ENCODE measurements at regions of chr2 and their contacts with region 1.

Region 1: DNA sequence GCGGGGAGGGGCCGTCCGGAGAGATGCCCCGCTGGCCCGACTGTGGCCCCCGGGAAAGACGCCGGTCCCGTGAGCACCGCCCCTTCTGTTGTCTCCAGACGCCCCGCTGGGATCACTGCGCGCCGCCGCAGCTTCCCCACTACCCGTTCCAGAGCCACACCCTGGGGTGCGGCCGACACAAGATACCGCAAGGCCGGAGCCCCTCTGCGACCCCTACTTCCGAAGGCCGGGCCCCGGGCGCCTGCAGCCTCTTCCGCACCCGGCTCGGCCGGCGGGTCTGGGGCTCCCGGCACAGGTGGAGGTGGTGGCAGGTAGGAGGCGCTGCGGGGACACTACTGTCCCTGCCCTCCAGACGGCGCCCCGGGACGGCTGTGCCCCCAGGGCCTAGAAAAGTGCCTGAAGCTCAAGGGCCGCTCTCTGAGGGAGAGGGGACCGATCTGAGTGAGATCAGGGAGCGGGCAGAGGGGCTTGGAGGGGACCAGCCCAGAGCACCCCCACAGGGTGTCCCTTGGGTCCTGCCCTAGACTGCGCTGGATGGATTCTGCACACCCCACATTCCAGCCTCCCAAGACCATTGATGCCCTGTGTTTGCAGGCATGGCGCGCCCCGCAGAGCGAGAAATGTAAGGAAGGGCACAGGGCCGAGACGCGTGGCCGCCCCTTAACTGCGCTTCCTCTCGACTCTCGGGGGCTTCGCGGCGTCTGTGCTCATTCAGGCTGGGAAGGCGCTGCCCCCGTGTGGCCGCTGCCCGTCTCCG is 80.0 kb downstream of the GFPT1 start:
- DNase-seq: peak; percentile 77
- ATAC-seq: peak; percentile 90
- H3K4me3 ChIP-seq: peak overlapping the region; percentile 35; the same call in 1 of the 2 replicates
- H3K27ac ChIP-seq: peak overlapping the region; percentile 71
- H3K4me1 ChIP-seq: peaks cover 31% of the 10 kb centered on the region
- H3K27me3 ChIP-seq: no peaks in the 10 kb centered on the region
- CTCF ChIP-seq: peak; percentile 93
- POLR2A ChIP-seq: peak; percentile 57
- RAD21 ChIP-seq: peak; percentile 98

Region 2: GRCh38 chr2:68943581-68944568 is 363.1 kb before region 1 on chr2:
- CTCF ChIA-PET with region 1: interaction called, 3 read pairs
- POLR2A ChIA-PET with region 1: no interaction called
- dilution Hi-C with region 1: no loop called
- in situ Hi-C with region 1: loop called (anchors 5 kb)
- intact Hi-C with region 1: loop called (anchors 1 kb)
- DNase-seq: peak; percentile 64
- ATAC-seq: peak; percentile 98
- H3K4me3 ChIP-seq: no peak overlapping the region
- H3K27ac ChIP-seq: peak overlapping the region; percentile 61
- H3K4me1 ChIP-seq: peaks cover 5% of the 10 kb centered on the region
- H3K27me3 ChIP-seq: no peaks in the 10 kb centered on the region
- CTCF ChIP-seq: peak; percentile 76
- POLR2A ChIP-seq: 0 out of 2 replicates have a peak, but pooled peaks have one; percentile 28
- RAD21 ChIP-seq: peak; percentile 82

Region 3: GRCh38 chr2:69026026-69026425 is 281.0 kb before region 1 on chr2:
- CTCF ChIA-PET with region 1: interaction called, 3 read pairs
- POLR2A ChIA-PET with region 1: no interaction called
- dilution Hi-C with region 1: loop called (anchors 25 kb)
- in situ Hi-C with region 1: no loop called
- intact Hi-C with region 1: loop called (anchors 2 kb)
- DNase-seq: peak; percentile 46
- ATAC-seq: peak; percentile 70
- H3K4me3 ChIP-seq: no peak overlapping the region
- H3K27ac ChIP-seq: no peak overlapping the region
- H3K4me1 ChIP-seq: peaks cover 18% of the 10 kb centered on the region
- H3K27me3 ChIP-seq: no peaks in the 10 kb centered on the region
- CTCF ChIP-seq: peak; percentile 56
- POLR2A ChIP-seq: no peak
- RAD21 ChIP-seq: peak; percentile 81

Region 4: GRCh38 chr2:69082430-69082997 is 224.5 kb before region 1 on chr2:
- CTCF ChIA-PET with region 1: no interaction called
- POLR2A ChIA-PET with region 1: no interaction called
- dilution Hi-C with region 1: no loop called
- in situ Hi-C with region 1: no loop called
- intact Hi-C with region 1: loop called (anchors 5 kb)
- DNase-seq: peak; percentile 90
- ATAC-seq: peak; percentile 78
- H3K4me3 ChIP-seq: no peak overlapping the region
- H3K27ac ChIP-seq: peak overlapping the region; percentile 83
- H3K4me1 ChIP-seq: peaks cover 22% of the 10 kb centered on the region
- H3K27me3 ChIP-seq: no peaks in the 10 kb centered on the region
- CTCF ChIP-seq: no peak
- POLR2A ChIP-seq: no peak
- RAD21 ChIP-seq: no peak

Region 5: DNA sequence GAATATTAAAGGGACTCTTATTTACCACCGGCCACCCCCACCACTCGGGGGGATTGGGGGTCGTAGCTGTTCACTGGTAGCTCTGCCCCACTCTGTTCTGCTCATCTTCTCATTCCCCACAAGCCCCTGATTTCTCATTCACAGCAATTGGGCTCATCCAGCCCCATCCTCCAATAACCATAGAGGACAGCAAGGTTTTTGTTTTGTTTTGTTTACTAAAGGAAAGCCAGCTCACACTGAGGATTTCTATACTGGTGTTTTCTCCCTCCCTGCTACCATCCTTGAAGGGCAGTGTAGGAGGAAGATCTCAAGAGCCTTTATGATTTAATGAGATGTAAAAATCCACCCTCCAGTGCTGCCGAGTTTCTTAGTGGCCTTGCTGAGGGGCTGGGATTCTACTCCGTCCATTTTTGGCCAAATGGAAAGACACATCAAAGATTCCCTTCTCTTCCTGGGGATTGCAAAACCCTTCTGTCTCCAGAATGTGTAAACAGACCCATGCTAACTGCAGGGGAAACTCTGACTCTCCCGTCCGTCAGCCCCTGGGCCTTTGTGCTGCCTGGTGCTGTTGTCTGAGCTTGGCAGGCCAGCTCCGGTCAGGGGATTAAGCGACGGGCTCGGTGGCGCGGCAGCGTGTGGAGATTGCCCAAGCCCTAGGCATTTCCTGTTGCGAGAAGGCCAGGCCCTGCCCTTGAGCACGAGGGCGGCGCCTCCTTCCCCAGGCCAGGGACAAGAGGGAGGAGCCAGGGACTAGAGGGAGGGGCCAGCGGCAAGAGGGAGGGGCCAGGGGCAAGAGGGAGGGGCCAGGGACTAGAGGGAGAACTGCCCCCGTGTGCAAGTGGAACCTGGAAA is 129.0 kb before region 1 on chr2:
- CTCF ChIA-PET with region 1: no interaction called
- POLR2A ChIA-PET with region 1: interaction called, 3 read pairs
- dilution Hi-C with region 1: no loop called
- in situ Hi-C with region 1: no loop called
- intact Hi-C with region 1: loop called (anchors 5 kb)
- DNase-seq: peak; percentile 92
- ATAC-seq: peak; percentile 89
- H3K4me3 ChIP-seq: no peak overlapping the region; the same call in 1 of the 2 replicates
- H3K27ac ChIP-seq: peak overlapping the region; percentile 88
- H3K4me1 ChIP-seq: peaks cover 22% of the 10 kb centered on the region
- H3K27me3 ChIP-seq: no peaks in the 10 kb centered on the region
- CTCF ChIP-seq: no peak
- POLR2A ChIP-seq: peak; percentile 75; the same call in 1 of the 2 replicates
- RAD21 ChIP-seq: peak; percentile 23; the same call in 1 of the 2 replicates

Region 6: GRCh38 chr2:69242651-69243051 is 64.3 kb before region 1 on chr2:
- CTCF ChIA-PET with region 1: no interaction called
- POLR2A ChIA-PET with region 1: no interaction called
- dilution Hi-C with region 1: no loop called
- in situ Hi-C with region 1: no loop called
- intact Hi-C with region 1: loop called (anchors 5 kb)
- DNase-seq: peak; percentile 86
- ATAC-seq: peak; percentile 81
- H3K4me3 ChIP-seq: no peak overlapping the region
- H3K27ac ChIP-seq: peak overlapping the region; percentile 98
- H3K4me1 ChIP-seq: peaks cover 41% of the 10 kb centered on the region
- H3K27me3 ChIP-seq: no peaks in the 10 kb centered on the region
- CTCF ChIP-seq: no peak
- POLR2A ChIP-seq: no peak
- RAD21 ChIP-seq: no peak

Region 7: DNA sequence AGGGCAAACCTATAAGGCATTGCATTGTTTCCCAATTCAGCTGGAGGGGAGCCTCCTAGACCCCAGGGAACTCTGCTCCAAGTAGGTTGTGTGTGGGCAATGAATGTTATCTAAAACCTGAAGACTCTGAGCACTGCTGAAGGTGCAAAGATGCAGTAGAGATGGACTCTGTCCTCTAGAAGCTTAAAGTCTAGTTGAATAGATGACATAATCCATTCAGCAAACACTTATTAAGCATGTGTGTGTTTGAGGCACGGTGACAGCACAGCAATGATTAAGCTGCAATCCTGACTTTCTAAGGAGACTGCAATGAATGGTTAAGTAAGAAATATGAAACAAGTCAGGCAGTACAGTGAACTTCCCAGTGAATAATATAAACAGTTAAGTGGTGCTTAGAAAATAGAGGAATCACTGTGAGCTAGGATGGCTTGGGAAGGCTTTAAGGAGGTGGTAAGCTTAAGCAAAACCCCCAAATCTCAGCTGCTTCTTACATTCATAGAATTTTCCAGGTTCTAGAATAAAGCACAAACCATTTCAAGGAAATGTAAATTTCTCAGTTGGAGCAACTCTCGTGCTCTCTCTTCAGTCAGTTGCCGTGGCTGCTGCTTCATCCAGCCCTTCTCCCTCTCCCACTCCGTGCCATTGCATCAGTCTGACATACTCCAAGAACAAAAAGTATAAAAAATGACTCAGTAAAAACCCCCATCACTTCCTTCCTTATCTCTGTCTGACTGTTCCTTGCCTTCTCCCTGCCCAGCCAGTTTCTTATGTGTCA is 627.0 kb after region 1 on chr2:
- CTCF ChIA-PET with region 1: no interaction called
- POLR2A ChIA-PET with region 1: no interaction called
- dilution Hi-C with region 1: no loop called
- in situ Hi-C with region 1: no loop called
- intact Hi-C with region 1: no loop called
- DNase-seq: peak; percentile 93
- ATAC-seq: peak; percentile 87
- H3K4me3 ChIP-seq: peak overlapping the region; percentile 8; the same call in 1 of the 2 replicates
- H3K27ac ChIP-seq: peak overlapping the region; percentile 74
- H3K4me1 ChIP-seq: peaks cover 11% of the 10 kb centered on the region
- H3K27me3 ChIP-seq: no peaks in the 10 kb centered on the region
- CTCF ChIP-seq: no peak
- POLR2A ChIP-seq: peak; percentile 72; the same call in 1 of the 2 replicates
- RAD21 ChIP-seq: no peak